ENCODE measurements at regions of chr17 and their contacts with region 1.

Region 1: DNA sequence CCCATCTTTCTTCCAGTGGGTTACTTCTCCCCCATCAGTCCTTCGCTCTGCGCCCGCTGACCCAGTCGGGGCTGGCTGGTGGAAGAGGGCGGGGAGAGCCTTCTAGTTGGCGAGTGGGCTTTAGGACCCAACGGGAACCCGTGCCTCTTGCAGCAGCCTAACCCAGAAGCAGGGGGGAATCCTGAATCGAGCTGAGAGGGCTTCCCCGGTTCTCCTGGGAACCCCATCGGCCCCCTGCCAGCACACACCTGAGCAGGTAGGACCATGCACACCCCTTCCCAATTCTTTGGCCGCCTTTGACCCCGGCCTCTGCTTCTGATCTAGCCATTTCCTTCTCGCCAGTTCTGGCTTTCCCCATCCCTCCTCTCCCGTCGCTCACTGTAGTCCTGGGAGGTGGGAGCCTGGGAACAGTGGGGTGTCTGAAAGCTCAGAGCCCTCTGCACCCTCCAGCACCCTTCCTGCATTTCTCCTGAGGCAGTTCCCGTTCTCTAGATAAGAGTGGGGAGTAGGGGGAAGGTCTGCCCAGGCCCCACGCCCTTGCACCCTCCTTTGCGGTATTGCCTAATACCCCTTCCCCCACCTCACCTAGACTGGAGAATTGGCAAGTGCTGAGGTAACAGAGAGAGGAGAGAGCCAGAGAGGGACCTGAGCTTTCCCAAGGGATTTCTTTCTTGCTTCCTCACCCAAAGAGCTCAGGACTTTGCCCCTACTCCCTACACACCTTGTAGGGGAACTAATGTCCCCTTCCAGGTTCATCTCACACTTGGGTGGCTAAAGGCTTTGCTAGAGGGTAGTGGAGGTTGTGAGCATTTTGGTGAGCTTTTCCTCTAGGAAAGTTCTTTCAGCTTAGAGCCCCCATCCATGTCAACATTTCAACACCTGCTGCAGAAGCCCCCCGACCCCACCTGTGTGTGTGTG is at the start of gene RARA:
- DNase-seq: peak in 2 of 4 donors; percentile 74 to 83
- ATAC-seq: peak; percentile 68
- H3K4me3 ChIP-seq: peak within 1 kb of the TSS; percentile 45 to 57
- H3K27ac ChIP-seq: peak within 1 kb of the TSS; percentile 76 to 80
- H3K4me1 ChIP-seq: peaks cover 74 to 85% of the 10 kb centered on the region in 2 donors
- H3K27me3 ChIP-seq: no peaks in the 10 kb centered on the region
- CTCF ChIP-seq: no peak
- polyA plus RNA-seq, gene RARA: 45.5 to 58.6 (median 52.4) TPM

Region 2: GRCh38 chr17:40338058-40338457 is 28.8 kb after region 1 on chr17:
- intact Hi-C with region 1: no loop called
- DNase-seq: no peak
- ATAC-seq: no peak
- H3K4me3 ChIP-seq: no peak overlapping the region
- H3K27ac ChIP-seq: peak overlapping the region in 1 of 2 donors; percentile 100
- H3K4me1 ChIP-seq: peaks cover 29 to 87% of the 10 kb centered on the region in 2 donors
- H3K27me3 ChIP-seq: no peaks in the 10 kb centered on the region
- CTCF ChIP-seq: no peak

Region 3: DNA sequence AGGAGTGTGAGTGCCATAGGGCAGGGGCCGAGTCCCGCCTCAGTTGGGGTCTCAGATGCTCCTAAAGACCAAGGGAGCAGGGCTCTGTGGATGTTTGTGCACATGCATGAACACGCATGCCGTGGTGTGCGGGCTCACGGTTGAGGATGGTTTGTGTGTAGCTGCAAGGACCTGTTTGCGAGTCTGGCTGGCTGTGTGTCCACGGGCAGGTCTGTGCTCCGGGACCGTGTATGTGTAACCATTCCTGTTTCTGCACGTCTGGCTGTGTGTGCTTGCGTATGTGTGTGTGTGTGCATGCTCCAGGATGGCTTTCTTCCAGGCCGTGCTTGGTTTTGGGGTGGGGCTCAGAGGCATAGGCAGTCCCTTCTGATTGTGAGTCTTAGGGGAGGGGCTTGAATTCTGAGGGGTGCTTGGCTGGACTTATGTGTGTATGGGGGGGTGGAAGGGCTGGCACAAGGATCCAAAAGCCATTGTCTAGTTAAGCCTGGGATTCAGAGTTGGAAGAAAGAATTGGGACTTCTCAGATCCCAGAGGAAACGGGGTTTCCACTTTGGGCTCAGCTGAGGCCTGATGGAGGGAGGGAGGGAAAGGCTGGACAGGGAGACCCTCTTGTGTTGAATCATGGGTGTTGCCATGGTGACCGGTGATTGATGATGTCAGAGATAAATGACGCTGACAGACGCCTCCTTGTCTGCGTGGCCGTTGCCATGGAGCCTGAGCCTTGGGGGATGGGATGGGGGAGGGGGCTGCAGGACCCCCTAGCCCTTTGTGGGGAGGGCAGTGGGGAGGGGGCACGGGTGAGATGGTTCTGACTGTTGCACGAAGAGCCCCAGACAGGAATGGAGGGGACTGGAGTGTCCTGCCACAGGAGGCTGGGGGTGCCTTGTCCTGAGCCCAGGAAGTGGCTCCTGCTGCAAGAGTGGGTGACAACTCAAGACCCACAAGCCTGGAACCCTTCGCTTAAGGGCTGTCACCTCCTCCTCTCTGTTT is 40.9 kb after region 1 on chr17:
- intact Hi-C with region 1: loop called (anchors 5 to 10 kb)
- DNase-seq: peak in 3 of 4 donors; percentile 44 to 68 (median 61)
- ATAC-seq: no peak
- H3K4me3 ChIP-seq: no peak overlapping the region
- H3K27ac ChIP-seq: peak overlapping the region in 1 of 2 donors; percentile 100
- H3K4me1 ChIP-seq: peaks cover 50 to 94% of the 10 kb centered on the region in 2 donors
- H3K27me3 ChIP-seq: no peaks in the 10 kb centered on the region
- CTCF ChIP-seq: no peak

Region 4: DNA sequence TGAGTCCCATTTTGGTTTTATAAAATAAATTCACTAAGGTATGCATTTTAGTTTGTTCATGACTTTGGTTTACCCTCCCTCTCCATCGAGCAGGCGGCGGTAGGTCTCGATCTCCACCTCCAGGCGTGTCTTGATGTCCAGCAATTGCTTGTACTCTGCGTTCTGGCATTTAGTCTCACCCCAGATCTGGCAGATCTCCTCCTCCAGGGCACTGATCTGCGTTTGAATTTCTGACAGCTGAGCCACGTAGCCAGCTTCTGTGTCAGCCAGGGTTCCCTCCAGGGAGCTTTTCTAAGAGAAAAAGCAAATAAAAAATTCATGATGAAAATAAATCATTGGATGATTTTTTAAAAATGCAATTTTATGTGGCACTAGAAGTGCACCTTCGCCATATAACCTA is 390.1 kb after region 1 on chr17:
- intact Hi-C with region 1: no loop called
- DNase-seq: no peak
- ATAC-seq: no peak
- H3K4me3 ChIP-seq: no peak overlapping the region
- H3K27ac ChIP-seq: no peak overlapping the region
- H3K4me1 ChIP-seq: peaks cover 5 to 8% of the 10 kb centered on the region in 2 donors
- H3K27me3 ChIP-seq: peaks cover 0 to 12% of the 10 kb centered on the region in 2 donors
- CTCF ChIP-seq: no peak